HCT116 (cell line): ENCODE measurements at regions of chr7 and their contacts with region 1.

Region 1: DNA sequence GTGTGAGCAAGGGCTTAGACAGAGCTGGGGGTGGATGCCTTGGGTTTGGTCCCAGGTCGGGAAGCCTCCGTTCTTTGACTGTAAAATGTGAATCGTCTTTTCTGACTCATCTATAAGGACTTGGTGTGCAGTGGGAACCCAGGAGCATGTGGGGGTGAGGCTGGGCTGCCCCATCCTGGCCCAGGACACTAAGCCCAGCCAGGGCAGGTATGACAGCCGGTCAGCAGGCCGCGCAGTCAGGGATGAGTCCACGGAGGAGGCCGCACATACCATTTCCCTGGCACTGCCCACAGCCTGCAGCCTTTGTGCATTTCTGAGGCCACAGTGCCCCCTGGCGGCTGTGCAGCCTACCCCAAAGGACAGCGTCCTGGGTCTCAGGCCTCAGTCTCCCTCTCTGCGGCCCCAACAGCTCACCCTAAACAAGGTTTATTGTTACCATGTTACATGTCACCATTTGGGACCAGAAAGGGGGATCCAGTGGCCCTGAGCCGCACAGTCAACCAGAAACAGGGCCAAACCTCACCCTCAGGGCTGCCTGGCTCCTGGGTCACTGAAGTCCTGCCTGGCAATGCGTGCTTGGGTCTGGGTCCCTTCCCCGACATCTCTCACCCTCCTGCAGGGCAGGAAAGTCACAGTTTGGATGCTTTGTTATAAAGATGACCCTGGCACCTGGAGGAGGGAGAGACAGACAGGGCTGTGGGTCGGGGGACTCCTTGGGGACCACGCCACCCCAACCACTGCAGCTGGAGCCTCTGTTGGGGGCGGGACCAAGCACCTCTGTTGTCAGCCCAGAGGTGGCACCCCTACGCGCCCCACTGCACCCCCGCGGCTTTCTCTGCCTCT is 14.4 kb upstream of the SH2B2 start:
- DNase-seq: peak; percentile 47
- ATAC-seq: peak; percentile 74
- H3K4me3 ChIP-seq: no peak overlapping the region
- H3K27ac ChIP-seq: peak overlapping the region; percentile 83; the same call in 1 of the 2 replicates
- H3K4me1 ChIP-seq: peaks cover 26 to 41% of the 10 kb centered on the region in 2 experiments
- H3K27me3 ChIP-seq: no peaks in the 10 kb centered on the region
- CTCF ChIP-seq: peak in 2 of 3 experiments; percentile 94 to 95; a peak in 4 of 6 replicates
- POLR2A ChIP-seq: no peak
- RAD21 ChIP-seq: no peak

Region 2: DNA sequence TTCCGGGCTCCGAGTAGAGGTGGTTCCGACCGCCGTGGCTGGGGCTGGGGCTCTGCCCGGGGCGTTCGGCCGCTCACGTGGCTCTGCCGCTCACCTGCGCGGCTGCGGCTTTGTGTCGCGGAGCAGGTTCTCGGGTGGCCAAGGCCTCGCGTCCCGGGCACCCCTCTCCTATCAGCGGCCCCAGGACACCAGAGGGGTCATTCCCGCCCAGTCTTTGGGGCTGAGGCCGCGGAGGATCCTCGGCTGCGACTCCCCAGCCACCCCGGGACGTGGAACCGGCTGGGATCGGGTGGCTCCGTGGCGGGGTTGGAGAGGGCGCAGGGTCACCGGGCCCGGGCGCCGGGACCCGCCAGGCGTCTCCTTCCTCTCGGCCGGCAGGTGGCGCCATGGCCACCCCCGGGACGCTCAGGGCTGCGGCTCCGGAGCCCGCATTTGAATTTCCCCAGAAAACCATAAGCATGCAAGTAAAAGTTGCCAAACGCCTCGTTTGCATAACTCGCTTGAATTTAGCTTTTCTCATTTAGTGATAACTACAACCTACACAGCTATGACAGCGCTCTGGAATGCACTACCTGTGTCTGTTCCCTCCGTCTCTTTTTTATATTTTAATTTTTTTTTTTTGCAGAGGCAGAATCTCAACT is 908.4 kb before region 1 on chr7:
- CTCF ChIA-PET with region 1: no interaction called
- POLR2A ChIA-PET with region 1: no interaction called
- RAD21 ChIA-PET with region 1: no interaction called
- intact Hi-C with region 1: loop called (anchors 5 kb)
- DNase-seq: peak; percentile 15
- ATAC-seq: peak; percentile 99
- H3K4me3 ChIP-seq: peak overlapping the region; percentile 37 to 54
- H3K27ac ChIP-seq: no peak overlapping the region
- H3K4me1 ChIP-seq: peaks cover 0 to 8% of the 10 kb centered on the region in 2 experiments; a peak in 1 of 4 replicates
- H3K27me3 ChIP-seq: no peaks in the 10 kb centered on the region
- CTCF ChIP-seq: peak; percentile 78 to 89 (median 87)
- POLR2A ChIP-seq: no peak
- RAD21 ChIP-seq: peak; percentile 80

Region 3: DNA sequence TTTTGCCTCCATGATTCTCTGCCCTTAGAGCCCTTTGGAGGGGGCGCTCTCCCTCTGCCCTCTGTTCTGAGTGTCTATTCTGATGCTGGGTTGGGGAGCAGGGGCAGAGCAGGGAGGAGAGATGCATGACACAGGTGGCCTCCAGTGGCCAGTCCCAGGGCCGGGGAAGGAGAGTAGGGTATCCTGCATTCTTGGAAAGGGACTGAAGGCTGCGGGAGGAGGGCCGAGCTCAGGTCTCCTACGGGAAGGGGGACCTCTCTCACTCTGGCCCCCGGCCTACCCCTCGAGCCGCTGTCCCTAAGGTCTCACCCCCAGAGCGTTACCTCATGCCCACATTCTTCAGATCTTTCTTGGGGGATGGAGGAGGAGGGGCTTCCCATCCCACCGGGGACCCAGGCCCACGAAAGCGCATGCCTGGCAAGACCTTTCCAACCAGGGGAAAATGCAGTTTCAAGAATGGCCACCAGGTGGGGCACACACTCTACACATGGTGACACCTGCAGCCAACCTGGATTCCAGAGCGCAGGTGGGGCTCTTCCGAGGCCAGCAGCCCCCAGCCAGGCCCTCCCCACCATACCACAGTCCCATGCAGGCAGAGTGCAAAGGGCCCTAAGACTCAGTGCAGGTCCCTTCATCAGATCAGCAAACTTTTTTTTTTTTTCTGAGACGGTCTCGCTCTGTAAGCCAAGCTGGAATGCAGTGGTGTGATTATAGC is 729.6 kb before region 1 on chr7:
- CTCF ChIA-PET with region 1: interaction called, 61 read pairs
- POLR2A ChIA-PET with region 1: interaction called, 3 read pairs
- RAD21 ChIA-PET with region 1: interaction called, 6 to 15 read pairs
- intact Hi-C with region 1: loop called (anchors 1 kb)
- DNase-seq: peak; percentile 33
- ATAC-seq: peak; percentile 71
- H3K4me3 ChIP-seq: no peak overlapping the region
- H3K27ac ChIP-seq: no peak overlapping the region
- H3K4me1 ChIP-seq: peaks cover 0 to 18% of the 10 kb centered on the region in 2 experiments; a peak in 2 of 4 replicates
- H3K27me3 ChIP-seq: no peaks in the 10 kb centered on the region
- CTCF ChIP-seq: peak; percentile 79 to 89 (median 88); a peak in 5 of 6 replicates
- POLR2A ChIP-seq: no peak
- RAD21 ChIP-seq: peak; percentile 99

Region 4: GRCh38 chr7:101602484-101603241 is 669.6 kb before region 1 on chr7:
- CTCF ChIA-PET with region 1: interaction called, 15 read pairs
- POLR2A ChIA-PET with region 1: no interaction called
- RAD21 ChIA-PET with region 1: no interaction called
- intact Hi-C with region 1: loop called (anchors 1 kb)
- DNase-seq: peak; percentile 59
- ATAC-seq: peak; percentile 88
- H3K4me3 ChIP-seq: no peak overlapping the region
- H3K27ac ChIP-seq: no peak overlapping the region
- H3K4me1 ChIP-seq: peaks cover 19 to 30% of the 10 kb centered on the region in 2 experiments; a peak in 3 of 4 replicates
- H3K27me3 ChIP-seq: no peaks in the 10 kb centered on the region
- CTCF ChIP-seq: peak; percentile 82 to 96 (median 95)
- POLR2A ChIP-seq: no peak
- RAD21 ChIP-seq: peak; percentile 98

Region 5: DNA sequence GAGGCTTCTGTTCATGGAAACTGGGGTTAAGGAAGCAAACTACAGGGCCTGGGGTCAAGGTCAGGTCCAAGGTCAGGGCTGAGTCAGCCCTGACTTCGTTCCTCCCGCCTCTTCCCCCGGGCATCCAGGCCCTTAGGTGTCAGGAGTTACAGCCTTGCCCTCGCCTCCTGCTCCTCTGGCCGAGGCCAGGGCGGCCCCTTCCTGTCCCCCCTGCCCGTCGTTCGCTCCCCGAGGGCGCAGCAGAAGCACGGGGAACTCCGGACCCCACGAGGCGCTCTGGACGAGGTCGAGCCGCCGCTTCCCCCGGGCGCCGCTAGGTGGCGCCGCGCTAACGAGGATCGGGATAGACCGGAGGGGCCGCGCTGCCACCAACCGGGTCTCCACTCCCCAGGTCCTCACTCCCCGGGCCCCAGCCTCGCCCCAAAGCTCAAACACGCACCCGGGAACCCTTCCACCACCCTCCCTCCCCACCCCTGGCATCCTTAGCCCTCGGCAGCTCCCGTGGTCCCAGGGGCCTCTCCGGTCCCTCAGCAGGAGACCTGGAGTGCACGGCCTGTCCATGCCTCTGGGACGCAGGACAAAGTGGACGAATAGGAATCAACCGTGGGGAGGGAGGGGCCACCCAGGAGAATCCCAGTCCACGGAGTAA is 584.0 kb before region 1 on chr7:
- CTCF ChIA-PET with region 1: interaction called, 3 read pairs
- POLR2A ChIA-PET with region 1: no interaction called
- RAD21 ChIA-PET with region 1: no interaction called
- intact Hi-C with region 1: loop called (anchors 5 kb)
- DNase-seq: peak; percentile 34
- ATAC-seq: peak; percentile 94
- H3K4me3 ChIP-seq: peak overlapping the region; percentile 27 to 42
- H3K27ac ChIP-seq: no peak overlapping the region; the same call in 1 of the 2 replicates
- H3K4me1 ChIP-seq: peaks cover 5 to 13% of the 10 kb centered on the region in 2 experiments; a peak in 3 of 4 replicates
- H3K27me3 ChIP-seq: no peaks in the 10 kb centered on the region
- CTCF ChIP-seq: peak; percentile 82 to 89 (median 84)
- POLR2A ChIP-seq: no peak
- RAD21 ChIP-seq: peak; percentile 98

Region 6: DNA sequence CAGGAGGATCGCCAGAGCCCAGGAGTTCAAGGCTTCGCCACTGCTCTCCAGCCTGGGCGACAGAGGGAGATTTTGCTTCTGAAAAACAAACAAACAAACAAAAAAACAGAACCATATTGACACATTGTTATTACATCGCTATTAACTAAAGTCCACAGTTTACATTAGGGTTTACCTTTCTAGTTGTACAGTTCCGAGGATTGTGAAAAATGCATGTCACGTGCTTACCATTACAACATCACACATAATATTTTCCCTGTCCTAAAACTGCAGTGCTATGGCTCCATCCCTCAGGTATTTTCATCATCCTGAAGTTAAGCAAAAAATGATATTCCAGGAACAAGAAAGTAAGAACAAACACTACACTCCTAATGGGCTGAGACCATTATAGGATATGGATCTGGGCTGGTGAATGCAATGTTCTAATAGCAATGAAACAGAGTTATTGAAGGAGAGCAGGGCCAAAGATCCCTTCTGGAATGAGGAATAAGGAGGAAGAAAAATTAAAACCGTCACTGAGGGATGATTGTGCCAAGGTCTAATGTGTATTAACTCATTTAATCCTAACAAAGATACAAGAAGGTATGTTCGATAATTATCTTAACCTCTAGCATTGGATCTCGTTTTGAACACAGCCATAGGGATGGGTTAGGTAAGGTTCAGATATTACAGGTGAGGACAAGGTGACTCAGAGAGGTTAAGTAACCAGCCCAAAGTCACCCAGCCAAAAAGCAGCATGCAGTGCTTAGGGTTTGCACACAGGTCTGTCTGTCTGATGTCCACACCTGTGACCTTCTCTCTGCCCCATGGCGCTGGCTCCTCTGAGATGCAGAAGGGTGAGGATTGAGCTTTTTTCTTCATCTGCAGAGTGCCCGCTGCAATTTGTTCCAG is 468.9 kb before region 1 on chr7:
- CTCF ChIA-PET with region 1: no interaction called
- POLR2A ChIA-PET with region 1: no interaction called
- RAD21 ChIA-PET with region 1: no interaction called
- intact Hi-C with region 1: no loop called
- DNase-seq: no peak
- ATAC-seq: no peak
- H3K4me3 ChIP-seq: no peak overlapping the region
- H3K27ac ChIP-seq: no peak overlapping the region
- H3K4me1 ChIP-seq: peaks cover 6 to 11% of the 10 kb centered on the region in 2 experiments; a peak in 2 of 4 replicates
- H3K27me3 ChIP-seq: 0 out of 2 replicates have a peak, but pooled peaks cover 2% of the 10 kb centered on the region
- CTCF ChIP-seq: no peak
- POLR2A ChIP-seq: no peak
- RAD21 ChIP-seq: no peak

Region 7: GRCh38 chr7:102097584-102098161 is 174.6 kb before region 1 on chr7:
- CTCF ChIA-PET with region 1: no interaction called
- POLR2A ChIA-PET with region 1: no interaction called
- RAD21 ChIA-PET with region 1: no interaction called
- intact Hi-C with region 1: no loop called
- DNase-seq: peak; percentile 88
- ATAC-seq: peak; percentile 76
- H3K4me3 ChIP-seq: peak overlapping the region in 1 of 2 experiments; percentile 25; a peak in 2 of 4 replicates
- H3K27ac ChIP-seq: peak overlapping the region; percentile 99
- H3K4me1 ChIP-seq: peaks cover 79 to 98% of the 10 kb centered on the region in 2 experiments
- H3K27me3 ChIP-seq: no peaks in the 10 kb centered on the region
- CTCF ChIP-seq: no peak
- POLR2A ChIP-seq: no peak
- RAD21 ChIP-seq: peak; percentile 42